Psoas muscle (tissue), 8 donors: ENCODE measurements at regions of chr3 and their contacts with region 1.

Region 1: GRCh38 chr3:52406231-52406661 is 38.7 kb downstream of the SEMA3G start:
- DNase-seq: peak in 1 of 2 donors; percentile 53
- ATAC-seq: no peak
- H3K4me3 ChIP-seq: no peak overlapping the region
- H3K27ac ChIP-seq: no peak overlapping the region
- H3K4me1 ChIP-seq: peaks cover 16% of the 10 kb centered on the region
- H3K27me3 ChIP-seq: no peaks in the 10 kb centered on the region
- CTCF ChIP-seq: no peak

Region 2: GRCh38 chr3:52220380-52221026 is 185.7 kb before region 1 on chr3:
- intact Hi-C with region 1: loop called in 1 of 2 experiments (anchors 5 kb)
- DNase-seq: peak; percentile 86 to 93
- ATAC-seq: peak; percentile 68 to 78 (median 70)
- H3K4me3 ChIP-seq: no peak overlapping the region
- H3K27ac ChIP-seq: no peak overlapping the region
- H3K4me1 ChIP-seq: peaks cover 25% of the 10 kb centered on the region
- H3K27me3 ChIP-seq: no peaks in the 10 kb centered on the region
- CTCF ChIP-seq: peak; percentile 87

Region 3: GRCh38 chr3:52313774-52314188 is 92.5 kb before region 1 on chr3:
- intact Hi-C with region 1: loop called in 1 of 2 experiments (anchors 5 kb)
- DNase-seq: no peak
- ATAC-seq: peak in 3 of 4 donors; percentile 31 to 47 (median 42)
- H3K4me3 ChIP-seq: no peak overlapping the region
- H3K27ac ChIP-seq: no peak overlapping the region
- H3K4me1 ChIP-seq: peaks cover 6% of the 10 kb centered on the region
- H3K27me3 ChIP-seq: no peaks in the 10 kb centered on the region
- CTCF ChIP-seq: no peak

Region 4: DNA sequence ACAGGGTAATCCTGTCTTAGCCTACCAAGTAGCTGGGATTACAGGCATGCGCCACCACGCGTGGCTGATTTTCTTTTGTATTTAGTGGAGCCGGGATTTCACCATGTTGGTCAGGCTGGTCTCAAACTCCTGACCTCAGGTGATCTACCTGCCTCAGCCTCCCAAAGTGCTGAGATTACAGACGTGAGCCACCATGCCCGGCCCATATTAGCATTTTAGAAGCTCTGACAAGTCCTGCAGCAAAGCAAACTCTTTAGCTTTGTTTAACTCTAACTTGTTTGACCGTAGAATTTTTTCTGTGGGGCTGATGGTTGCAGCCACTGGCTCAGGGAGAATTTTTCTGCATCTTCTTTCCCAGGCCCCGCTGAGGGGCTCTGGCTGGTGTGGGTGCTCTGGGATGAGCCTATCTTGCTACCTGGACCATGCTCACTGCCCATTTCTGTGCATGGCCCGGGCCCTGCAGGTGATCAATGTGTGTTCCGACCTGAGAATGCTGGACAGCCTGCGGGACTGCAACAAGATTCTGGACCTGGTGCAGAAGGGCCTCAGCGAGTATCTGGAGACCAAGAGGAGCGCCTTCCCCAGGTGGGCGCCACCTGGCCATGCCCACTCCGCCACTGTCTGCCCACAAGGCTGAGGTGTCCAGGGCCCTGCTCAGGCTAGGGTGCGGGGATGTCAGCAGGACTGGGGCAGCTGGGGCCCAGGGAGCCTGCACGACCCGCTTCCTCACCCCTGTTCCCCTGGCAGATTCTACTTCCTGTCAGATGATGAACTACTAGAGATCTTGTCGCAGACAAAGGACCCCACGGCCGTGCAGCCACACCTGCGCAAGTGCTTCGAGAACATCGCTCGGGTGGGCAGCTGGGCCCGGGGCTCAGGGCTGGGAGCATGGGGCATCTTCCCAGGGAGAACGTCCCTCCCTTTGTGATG is 48.8 kb before region 1 on chr3:
- intact Hi-C with region 1: loop called in 1 of 2 experiments (anchors 5 kb)
- DNase-seq: peak; percentile 2 to 44
- ATAC-seq: no peak
- H3K4me3 ChIP-seq: no peak overlapping the region
- H3K27ac ChIP-seq: no peak overlapping the region
- H3K4me1 ChIP-seq: no peaks in the 10 kb centered on the region
- H3K27me3 ChIP-seq: no peaks in the 10 kb centered on the region
- CTCF ChIP-seq: no peak